Ascending aorta (tissue), 2 donors: ENCODE measurements at regions of chr12 and their contacts with region 1.

Region 1: GRCh38 chr12:68665016-68665569 is 21.7 kb upstream of the NUP107 start:
- DNase-seq: no peak
- H3K4me3 ChIP-seq: no peak overlapping the region
- H3K27ac ChIP-seq: no peak overlapping the region
- H3K4me1 ChIP-seq: no peaks in the 10 kb centered on the region
- H3K27me3 ChIP-seq: no peaks in the 10 kb centered on the region
- CTCF ChIP-seq: peak in 1 of 3 experiments; percentile 32

Region 2: DNA sequence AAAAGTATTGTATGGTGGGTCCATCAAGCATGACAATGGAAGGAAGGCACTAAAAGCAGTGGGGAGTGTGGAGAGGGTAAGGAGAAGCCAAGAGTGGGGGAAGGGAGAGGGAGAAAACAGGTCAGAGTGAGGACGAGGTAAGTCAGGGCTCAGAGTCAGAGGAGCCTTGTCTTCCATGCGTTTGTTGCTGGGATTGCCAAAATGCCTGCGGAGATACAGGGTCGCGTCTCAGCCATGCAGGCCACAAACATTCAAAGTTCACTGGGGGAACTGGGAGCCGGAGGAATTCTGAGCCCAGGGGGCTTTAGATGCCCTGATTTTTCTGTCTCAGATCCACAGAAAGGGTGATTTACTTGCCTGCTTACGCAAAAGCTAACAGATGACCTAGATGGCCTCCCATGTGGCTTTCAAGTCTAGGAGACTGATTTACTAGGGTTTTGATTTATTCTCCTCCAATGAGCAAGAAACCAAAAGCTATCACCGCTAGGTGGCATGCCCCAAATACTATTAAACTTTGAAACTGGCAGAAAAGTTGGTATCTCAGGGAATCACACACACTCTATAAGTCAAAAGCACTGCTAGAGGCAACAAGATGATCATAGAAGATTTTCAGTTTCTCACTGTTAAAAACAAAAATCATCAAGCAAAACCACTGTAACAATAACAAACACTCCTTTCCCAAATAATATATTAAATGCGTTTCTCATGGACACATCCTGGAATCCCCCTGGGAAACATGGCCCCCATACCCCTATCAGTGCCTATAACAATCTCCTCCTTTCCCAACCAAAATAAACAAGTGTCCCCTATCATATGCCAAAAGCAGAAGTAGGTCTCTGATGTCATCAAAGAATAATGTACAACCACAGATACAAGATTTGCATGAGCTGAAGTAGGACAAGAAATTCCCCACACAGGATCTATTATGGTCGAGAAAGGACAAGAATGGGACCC is 306.3 kb before region 1 on chr12:
- intact Hi-C with region 1: loop called (anchors 2 kb)
- DNase-seq: peak in 1 of 2 donors; percentile 80
- H3K4me3 ChIP-seq: no peak overlapping the region
- H3K27ac ChIP-seq: no peak overlapping the region
- H3K4me1 ChIP-seq: no peaks in the 10 kb centered on the region
- H3K27me3 ChIP-seq: no peaks in the 10 kb centered on the region
- CTCF ChIP-seq: peak; percentile 63 to 66 (median 64)

Region 3: GRCh38 chr12:69059483-69060457 is 394.7 kb after region 1 on chr12:
- intact Hi-C with region 1: no loop called
- DNase-seq: no peak
- H3K4me3 ChIP-seq: no peak overlapping the region
- H3K27ac ChIP-seq: no peak overlapping the region
- H3K4me1 ChIP-seq: no peaks in the 10 kb centered on the region
- H3K27me3 ChIP-seq: no peaks in the 10 kb centered on the region
- CTCF ChIP-seq: no peak